MCF 10A (cell line): ENCODE measurements at regions of chr11 and their contacts with region 1.

Region 1: DNA sequence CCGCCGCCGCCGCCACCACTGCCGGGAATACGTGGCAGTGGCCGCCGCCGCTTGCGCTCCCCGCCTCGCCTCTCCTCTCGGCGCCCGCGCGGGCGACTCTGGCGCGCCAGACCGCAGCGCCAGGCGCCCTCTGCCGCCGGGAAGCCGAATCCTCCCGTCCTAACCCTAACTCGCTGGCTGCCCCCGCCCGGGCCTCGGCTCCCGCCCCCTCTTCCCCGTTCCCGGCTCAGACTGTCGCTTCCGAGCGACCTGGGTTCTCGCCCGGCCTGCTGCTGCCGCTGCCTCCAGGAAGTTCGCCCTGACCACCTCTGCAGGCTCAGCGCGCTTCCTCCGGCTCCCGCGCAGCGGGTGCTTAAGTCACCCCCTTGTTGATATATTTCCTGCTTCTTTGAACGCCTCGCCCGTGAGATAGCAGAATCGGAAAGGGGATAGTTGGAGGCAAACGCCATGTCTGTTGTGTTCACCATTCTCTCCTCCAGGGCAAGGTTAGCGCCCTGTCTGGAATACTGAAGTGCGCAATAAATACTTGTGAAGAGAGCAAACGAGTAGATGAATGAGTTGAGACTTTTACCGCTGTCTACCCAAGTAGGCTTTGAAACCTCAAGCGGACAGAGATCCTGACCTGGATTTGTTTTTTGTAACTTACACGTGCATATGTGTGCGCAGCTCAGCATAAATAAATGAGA is at the start of gene SMCO4:
- DNase-seq: peak; percentile 79
- H3K4me3 Mint-ChIP-seq: peak within 1 kb of the TSS; percentile 79
- H3K27ac Mint-ChIP-seq: peak within 1 kb of the TSS; percentile 57
- H3K4me1 Mint-ChIP-seq: peaks cover 8% of the 10 kb centered on the region
- H3K27me3 Mint-ChIP-seq: peaks cover 11% of the 10 kb centered on the region
- CTCF ChIP-seq: peak; percentile 78
- total RNA-seq, gene SMCO4: 8.5 and 10.0 TPM in 2 replicates

Region 2: DNA sequence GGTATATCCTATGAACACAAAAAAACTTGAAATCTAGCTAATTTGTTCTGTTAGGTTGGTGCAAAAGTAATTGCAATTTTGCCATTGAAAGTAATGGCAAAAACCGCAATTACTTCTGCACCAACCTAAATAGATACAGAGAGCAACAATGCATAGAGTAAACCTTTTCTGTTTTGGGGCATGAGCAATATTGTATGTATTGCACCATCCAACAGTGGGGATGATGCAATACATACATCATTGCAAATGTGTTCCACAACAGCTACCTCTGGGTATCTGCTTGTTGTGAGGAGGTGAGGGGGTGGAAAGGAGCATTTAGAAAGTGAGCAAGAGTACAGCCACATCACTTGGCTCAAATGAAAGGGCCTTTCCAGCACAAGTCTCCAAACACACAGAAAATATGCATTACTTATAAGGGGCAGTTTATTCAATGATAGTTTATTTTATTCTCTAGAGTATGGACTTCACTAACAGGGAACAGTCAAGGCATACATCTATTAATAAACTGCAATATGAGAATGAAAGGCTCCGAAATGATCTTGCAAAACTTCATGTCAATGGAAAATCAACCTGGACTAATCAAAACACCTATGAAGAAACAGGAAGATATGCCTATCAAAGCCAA is 135.5 kb before region 1 on chr11:
- CTCF ChIA-PET with region 1: no interaction called
- POLR2A ChIA-PET with region 1: no interaction called
- intact Hi-C with region 1: no loop called
- DNase-seq: peak; percentile 74
- H3K4me3 Mint-ChIP-seq: no peak overlapping the region
- H3K27ac Mint-ChIP-seq: no peak overlapping the region
- H3K4me1 Mint-ChIP-seq: no peaks in the 10 kb centered on the region
- H3K27me3 Mint-ChIP-seq: no peaks in the 10 kb centered on the region
- CTCF ChIP-seq: no peak

Region 3: GRCh38 chr11:93432247-93432646 is 111.2 kb before region 1 on chr11:
- CTCF ChIA-PET with region 1: no interaction called
- POLR2A ChIA-PET with region 1: no interaction called
- intact Hi-C with region 1: no loop called
- DNase-seq: no peak
- H3K4me3 Mint-ChIP-seq: no peak overlapping the region
- H3K27ac Mint-ChIP-seq: no peak overlapping the region
- H3K4me1 Mint-ChIP-seq: no peaks in the 10 kb centered on the region
- H3K27me3 Mint-ChIP-seq: no peaks in the 10 kb centered on the region
- CTCF ChIP-seq: no peak

Region 4: DNA sequence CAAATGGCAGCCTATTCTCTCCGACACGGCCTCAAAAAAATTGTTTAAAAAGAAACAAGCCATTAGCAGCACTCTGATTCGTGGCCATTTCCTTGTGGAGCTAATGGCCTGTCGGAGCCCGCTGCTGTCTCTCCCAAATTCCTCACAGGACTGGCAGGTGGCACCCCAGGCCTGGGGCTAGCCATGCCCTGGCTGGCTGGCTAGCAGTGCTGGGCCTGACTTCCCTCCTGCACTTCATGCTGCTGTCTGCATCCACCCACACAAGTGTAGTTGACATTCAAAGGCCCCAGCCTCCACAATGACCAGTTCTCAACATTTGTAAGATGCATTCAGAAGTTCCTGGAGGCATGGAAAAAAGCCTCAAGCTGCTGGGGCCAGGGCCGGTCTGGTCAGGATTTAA is 61.7 kb before region 1 on chr11:
- CTCF ChIA-PET with region 1: interaction called, 5 read pairs
- POLR2A ChIA-PET with region 1: no interaction called
- intact Hi-C with region 1: loop called (anchors 1 kb)
- DNase-seq: peak; percentile 51
- H3K4me3 Mint-ChIP-seq: no peak overlapping the region
- H3K27ac Mint-ChIP-seq: no peak overlapping the region
- H3K4me1 Mint-ChIP-seq: peaks cover 9% of the 10 kb centered on the region
- H3K27me3 Mint-ChIP-seq: no peaks in the 10 kb centered on the region
- CTCF ChIP-seq: no peak